CD4-positive, alpha-beta memory T cell (primary cell): ENCODE measurements at regions of chr19 and their contacts with region 1.

Region 1: GRCh38 chr19:47124937-47125668 is 5.5 kb upstream of the SAE1 start:
- DNase-seq: peak in 4 of 5 donors; percentile 54 to 63 (median 60)
- H3K4me3 ChIP-seq: no peak overlapping the region
- H3K4me3 Mint-ChIP-seq: no peak overlapping the region
- H3K27ac ChIP-seq: no peak overlapping the region
- H3K27ac Mint-ChIP-seq: peak overlapping the region in 4 of 7 donors; percentile 30 to 77 (median 42)
- H3K4me1 ChIP-seq: no peaks in the 10 kb centered on the region
- H3K4me1 Mint-ChIP-seq: peaks cover 3 to 6% (median 6%) of the 10 kb centered on the region in 4 donors
- H3K27me3 ChIP-seq: no peaks in the 10 kb centered on the region
- H3K27me3 Mint-ChIP-seq: no peaks in the 10 kb centered on the region

Region 2: DNA sequence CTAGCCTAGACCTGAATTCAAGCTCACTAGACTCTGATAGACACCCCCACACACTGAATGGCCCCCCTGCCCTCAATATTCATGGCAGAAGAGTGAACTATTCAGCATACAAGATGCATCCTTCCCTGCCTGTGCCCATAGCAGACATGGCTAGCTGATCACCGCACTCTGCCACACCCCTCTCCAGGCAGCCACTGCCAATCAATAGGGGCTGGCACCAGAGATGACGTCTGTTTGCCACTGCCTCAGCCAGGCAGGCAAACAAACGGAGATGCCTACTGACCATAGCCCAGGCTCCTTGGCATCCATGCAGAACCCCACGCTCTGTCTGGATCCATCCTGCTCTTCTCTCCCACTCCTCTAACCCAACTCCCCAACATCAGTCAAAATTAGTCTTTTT is 119.2 kb before region 1 on chr19:
- CTCF ChIA-PET with region 1: no interaction called
- POLR2A ChIA-PET with region 1: no interaction called
- intact Hi-C with region 1: no loop called
- DNase-seq: peak in 1 of 5 donors; percentile 24
- H3K4me3 ChIP-seq: no peak overlapping the region
- H3K4me3 Mint-ChIP-seq: peak overlapping the region in 3 of 8 donors; percentile 7 to 40 (median 17)
- H3K27ac ChIP-seq: no peak overlapping the region
- H3K27ac Mint-ChIP-seq: peak overlapping the region in 4 of 7 donors; percentile 4 to 57 (median 14)
- H3K4me1 ChIP-seq: peaks cover 11% of the 10 kb centered on the region
- H3K4me1 Mint-ChIP-seq: peaks cover 11 to 19% (median 13%) of the 10 kb centered on the region in 4 donors
- H3K27me3 ChIP-seq: no peaks in the 10 kb centered on the region
- H3K27me3 Mint-ChIP-seq: no peaks in the 10 kb centered on the region

Region 3: GRCh38 chr19:47075179-47075810 is 49.8 kb before region 1 on chr19:
- CTCF ChIA-PET with region 1: interaction called, 123 read pairs
- POLR2A ChIA-PET with region 1: interaction called, 16 read pairs
- intact Hi-C with region 1: loop called (anchors 1 kb)
- DNase-seq: no peak
- H3K4me3 ChIP-seq: no peak overlapping the region
- H3K4me3 Mint-ChIP-seq: no peak overlapping the region
- H3K27ac ChIP-seq: no peak overlapping the region
- H3K27ac Mint-ChIP-seq: peak overlapping the region in 4 of 7 donors; percentile 57 to 86 (median 82)
- H3K4me1 ChIP-seq: no peaks in the 10 kb centered on the region
- H3K4me1 Mint-ChIP-seq: peaks cover 0 to 9% (median 5%) of the 10 kb centered on the region in 4 donors
- H3K27me3 ChIP-seq: no peaks in the 10 kb centered on the region
- H3K27me3 Mint-ChIP-seq: no peaks in the 10 kb centered on the region

Region 4: GRCh38 chr19:47081111-47081510 is 44.0 kb before region 1 on chr19:
- CTCF ChIA-PET with region 1: interaction called, 123 read pairs
- POLR2A ChIA-PET with region 1: interaction called, 16 read pairs
- intact Hi-C with region 1: loop called (anchors 1 kb)
- DNase-seq: no peak
- H3K4me3 ChIP-seq: no peak overlapping the region
- H3K4me3 Mint-ChIP-seq: no peak overlapping the region
- H3K27ac ChIP-seq: no peak overlapping the region
- H3K27ac Mint-ChIP-seq: peak overlapping the region in 1 of 7 donors; percentile 24
- H3K4me1 ChIP-seq: no peaks in the 10 kb centered on the region
- H3K4me1 Mint-ChIP-seq: peaks cover 0 to 4% (median 0%) of the 10 kb centered on the region in 4 donors
- H3K27me3 ChIP-seq: no peaks in the 10 kb centered on the region
- H3K27me3 Mint-ChIP-seq: no peaks in the 10 kb centered on the region